HEK293T (cell line): ENCODE measurements at regions of chr17 and their contacts with region 1.

Region 1: GRCh38 chr17:2386400-2387085 is 14.3 kb downstream of the MNT start:
- DNase-seq: no peak

Region 2: GRCh38 chr17:2406903-2407790 is 20.6 kb after region 1 on chr17:
- CTCF ChIA-PET with region 1: interaction called, 14 read pairs
- POLR2A ChIA-PET with region 1: interaction called, 10 read pairs
- DNase-seq: no peak